CD8-positive, alpha-beta T cell (primary cell): ENCODE measurements at regions of chr15 and their contacts with region 1.

Region 1: GRCh38 chr15:57861036-57861638 is 154.6 kb downstream of the POLR2M start:
- DNase-seq: peak in 4 of 9 experiments; percentile 17 to 65 (median 37)
- ATAC-seq: no peak
- H3K4me3 ChIP-seq: no peak overlapping the region
- H3K4me3 Mint-ChIP-seq: no peak overlapping the region
- H3K27ac ChIP-seq: no peak overlapping the region
- H3K27ac Mint-ChIP-seq: no peak overlapping the region
- H3K4me1 ChIP-seq: no peaks in the 10 kb centered on the region
- H3K4me1 Mint-ChIP-seq: no peaks in the 10 kb centered on the region
- H3K27me3 ChIP-seq: no peaks in the 10 kb centered on the region
- H3K27me3 Mint-ChIP-seq: peaks cover 5% of the 10 kb centered on the region
- CTCF ChIP-seq: peak; percentile 94

Region 2: DNA sequence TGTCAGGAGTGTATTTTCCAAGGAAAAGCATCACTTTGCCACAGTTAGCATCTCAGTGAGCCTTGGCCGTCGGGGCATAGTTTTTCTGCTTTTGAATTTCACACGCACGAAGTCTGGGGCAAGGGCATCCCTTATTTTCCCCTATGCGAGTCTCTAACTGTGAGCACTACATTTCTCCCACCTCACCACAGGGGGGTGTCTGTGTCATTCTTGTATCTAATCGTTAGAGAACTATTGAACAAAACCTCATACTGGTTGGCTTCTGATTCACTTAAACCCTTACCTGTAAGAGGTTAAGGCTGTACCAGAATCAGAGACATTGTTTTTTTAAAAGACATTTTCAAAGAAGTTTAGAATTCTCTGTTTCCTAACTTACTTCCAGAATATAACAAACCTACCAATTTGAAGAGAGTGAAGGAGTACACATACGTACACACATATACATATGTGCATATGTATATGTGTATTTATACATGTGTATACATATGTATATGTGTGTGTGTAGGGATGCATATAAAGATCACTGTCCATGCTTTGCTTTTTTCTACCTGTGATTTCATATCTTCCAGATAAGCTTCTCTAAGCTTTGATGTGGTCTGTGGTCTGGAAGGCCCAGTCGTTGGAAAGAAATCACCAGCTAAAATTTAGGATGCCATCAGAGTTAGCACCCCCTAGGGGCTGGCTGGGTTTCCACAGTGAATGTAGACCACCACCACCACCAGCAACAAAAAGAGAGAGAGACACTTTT is 220.0 kb before region 1 on chr15:
- CTCF ChIA-PET with region 1: interaction called, 9 read pairs
- POLR2A ChIA-PET with region 1: no interaction called
- intact Hi-C with region 1: loop called in 1 of 2 experiments (anchors 2 kb)
- DNase-seq: peak in 2 of 9 experiments; percentile 8 to 24
- ATAC-seq: no peak
- H3K4me3 ChIP-seq: no peak overlapping the region
- H3K4me3 Mint-ChIP-seq: no peak overlapping the region
- H3K27ac ChIP-seq: no peak overlapping the region
- H3K27ac Mint-ChIP-seq: no peak overlapping the region
- H3K4me1 ChIP-seq: no peaks in the 10 kb centered on the region
- H3K4me1 Mint-ChIP-seq: no peaks in the 10 kb centered on the region
- H3K27me3 ChIP-seq: no peaks in the 10 kb centered on the region
- H3K27me3 Mint-ChIP-seq: peaks cover 4% of the 10 kb centered on the region
- CTCF ChIP-seq: peak; percentile 24

Region 3: DNA sequence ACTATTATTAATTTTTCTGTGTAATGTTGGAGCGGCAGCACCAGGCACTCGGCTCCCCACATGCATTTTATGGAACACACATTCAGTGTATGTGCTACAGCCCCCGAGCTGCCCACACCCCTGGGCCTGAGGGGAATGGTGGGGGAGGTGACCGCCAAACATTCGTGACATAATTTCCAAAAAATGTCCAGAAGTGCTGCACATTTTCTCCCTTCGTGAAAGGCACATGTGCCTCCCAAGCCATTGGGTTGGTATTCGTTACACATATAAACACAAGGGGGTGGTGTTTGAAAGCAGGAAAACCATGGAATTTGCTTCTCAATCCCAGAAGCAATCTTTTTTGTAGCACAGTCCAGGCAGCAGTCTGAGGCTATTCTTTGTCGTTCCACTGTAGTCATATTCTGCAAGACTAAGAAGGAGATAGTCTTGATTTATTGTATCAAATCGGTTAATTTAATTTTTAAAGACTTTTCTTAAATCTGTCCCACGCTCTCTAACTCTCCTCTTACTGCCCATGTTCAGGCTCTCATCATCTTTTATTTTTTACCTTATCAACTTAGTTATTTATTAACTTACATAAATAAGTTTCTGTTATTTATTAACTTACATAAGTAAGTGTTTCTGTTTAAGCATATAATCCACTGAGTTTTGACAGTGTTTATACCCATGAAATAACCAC is 193.8 kb before region 1 on chr15:
- CTCF ChIA-PET with region 1: interaction called, 45 read pairs
- POLR2A ChIA-PET with region 1: no interaction called
- intact Hi-C with region 1: loop called in 1 of 2 experiments (anchors 1 kb)
- DNase-seq: peak in 2 of 9 experiments; percentile 4 to 22
- ATAC-seq: no peak
- H3K4me3 ChIP-seq: no peak overlapping the region
- H3K4me3 Mint-ChIP-seq: no peak overlapping the region
- H3K27ac ChIP-seq: no peak overlapping the region
- H3K27ac Mint-ChIP-seq: no peak overlapping the region
- H3K4me1 ChIP-seq: no peaks in the 10 kb centered on the region
- H3K4me1 Mint-ChIP-seq: no peaks in the 10 kb centered on the region
- H3K27me3 ChIP-seq: no peaks in the 10 kb centered on the region
- H3K27me3 Mint-ChIP-seq: peaks cover 11% of the 10 kb centered on the region
- CTCF ChIP-seq: peak; percentile 25

Region 4: GRCh38 chr15:57849317-57849716 is 11.8 kb before region 1 on chr15:
- CTCF ChIA-PET with region 1: interaction called, 45 read pairs
- POLR2A ChIA-PET with region 1: no interaction called
- intact Hi-C with region 1: no loop called
- DNase-seq: no peak
- ATAC-seq: no peak
- H3K4me3 ChIP-seq: no peak overlapping the region
- H3K4me3 Mint-ChIP-seq: no peak overlapping the region
- H3K27ac ChIP-seq: no peak overlapping the region
- H3K27ac Mint-ChIP-seq: no peak overlapping the region
- H3K4me1 ChIP-seq: no peaks in the 10 kb centered on the region
- H3K4me1 Mint-ChIP-seq: no peaks in the 10 kb centered on the region
- H3K27me3 ChIP-seq: peaks cover 0 to 4% of the 10 kb centered on the region in 2 experiments
- H3K27me3 Mint-ChIP-seq: peaks cover 8% of the 10 kb centered on the region
- CTCF ChIP-seq: no peak

Region 5: DNA sequence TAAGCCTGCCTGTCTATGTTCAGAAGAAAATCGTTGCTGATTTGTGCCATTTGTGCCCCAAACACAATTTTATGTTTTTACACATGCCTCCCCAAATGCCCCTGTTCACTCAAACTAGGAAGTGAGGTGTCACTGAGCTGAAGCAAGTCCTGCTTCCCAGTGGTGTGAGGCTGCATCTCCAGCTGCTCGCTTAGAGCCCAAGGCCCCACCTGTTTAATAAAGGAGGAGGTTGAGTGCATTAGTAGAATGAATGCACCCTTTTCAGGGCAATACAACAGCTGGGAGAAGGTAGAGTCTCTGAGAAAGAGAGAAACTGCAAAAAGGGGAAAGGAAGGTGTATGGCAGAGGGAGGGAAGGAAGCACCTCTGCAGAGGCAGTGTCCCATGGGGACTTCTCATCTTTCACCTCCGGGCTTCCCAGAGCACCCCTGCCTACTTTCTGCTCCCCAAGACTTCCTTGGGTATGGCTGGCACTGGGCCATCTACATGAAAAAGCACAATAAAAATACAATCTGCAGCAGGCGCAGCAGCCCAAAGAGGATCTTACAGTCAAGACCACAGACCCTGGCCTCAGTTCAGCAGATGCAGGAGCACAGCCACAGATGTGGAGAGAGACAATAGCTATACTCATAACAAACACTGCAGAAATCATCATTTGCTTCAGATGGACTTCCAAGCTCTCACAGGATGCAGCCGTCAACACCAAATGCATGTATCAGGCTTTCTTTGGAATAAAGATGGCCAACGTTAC is 11.3 kb after region 1 on chr15:
- CTCF ChIA-PET with region 1: interaction called, 11 read pairs
- POLR2A ChIA-PET with region 1: no interaction called
- intact Hi-C with region 1: no loop called
- DNase-seq: no peak
- ATAC-seq: no peak
- H3K4me3 ChIP-seq: no peak overlapping the region
- H3K4me3 Mint-ChIP-seq: no peak overlapping the region
- H3K27ac ChIP-seq: no peak overlapping the region
- H3K27ac Mint-ChIP-seq: no peak overlapping the region
- H3K4me1 ChIP-seq: peaks cover 10% of the 10 kb centered on the region
- H3K4me1 Mint-ChIP-seq: peaks cover 9% of the 10 kb centered on the region
- H3K27me3 ChIP-seq: peaks cover under 1 to 10% of the 10 kb centered on the region in 2 experiments
- H3K27me3 Mint-ChIP-seq: peaks cover 36% of the 10 kb centered on the region
- CTCF ChIP-seq: no peak

Region 6: GRCh38 chr15:57881361-57881760 is 20.2 kb after region 1 on chr15:
- CTCF ChIA-PET with region 1: interaction called, 10 read pairs
- POLR2A ChIA-PET with region 1: no interaction called
- intact Hi-C with region 1: no loop called
- DNase-seq: no peak
- ATAC-seq: no peak
- H3K4me3 ChIP-seq: no peak overlapping the region
- H3K4me3 Mint-ChIP-seq: no peak overlapping the region
- H3K27ac ChIP-seq: no peak overlapping the region
- H3K27ac Mint-ChIP-seq: no peak overlapping the region
- H3K4me1 ChIP-seq: no peaks in the 10 kb centered on the region
- H3K4me1 Mint-ChIP-seq: no peaks in the 10 kb centered on the region
- H3K27me3 ChIP-seq: no peaks in the 10 kb centered on the region
- H3K27me3 Mint-ChIP-seq: peaks cover 14% of the 10 kb centered on the region
- CTCF ChIP-seq: no peak

Region 7: GRCh38 chr15:58038426-58039078 is 177.4 kb after region 1 on chr15:
- CTCF ChIA-PET with region 1: no interaction called
- POLR2A ChIA-PET with region 1: no interaction called
- intact Hi-C with region 1: no loop called
- DNase-seq: no peak
- ATAC-seq: no peak
- H3K4me3 ChIP-seq: no peak overlapping the region
- H3K4me3 Mint-ChIP-seq: no peak overlapping the region
- H3K27ac ChIP-seq: no peak overlapping the region
- H3K27ac Mint-ChIP-seq: no peak overlapping the region
- H3K4me1 ChIP-seq: no peaks in the 10 kb centered on the region
- H3K4me1 Mint-ChIP-seq: no peaks in the 10 kb centered on the region
- H3K27me3 ChIP-seq: peaks cover 0 to 3% of the 10 kb centered on the region in 2 experiments
- H3K27me3 Mint-ChIP-seq: peaks cover 27% of the 10 kb centered on the region
- CTCF ChIP-seq: no peak